Calu3 (cell line): ENCODE measurements at regions of chr18 and their contacts with region 1.

Region 1: DNA sequence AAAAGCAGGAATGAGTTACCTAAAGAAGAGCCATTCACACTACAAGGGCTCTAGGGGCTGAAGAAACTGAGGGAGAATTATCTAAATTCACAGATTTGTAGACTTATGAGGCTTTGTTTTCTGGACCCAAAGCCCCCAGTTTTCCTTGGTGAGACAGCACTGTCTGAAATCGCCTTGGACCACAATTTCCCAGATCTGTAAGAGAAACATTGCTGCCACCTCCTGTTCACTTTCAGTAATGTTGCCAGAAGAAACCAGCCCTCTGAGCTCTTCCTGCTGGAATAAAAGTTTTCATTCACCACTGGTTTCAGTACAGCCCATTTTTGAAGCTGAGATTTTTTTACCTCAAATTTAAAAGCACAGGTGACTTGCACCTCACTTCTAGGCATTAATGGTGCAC is 169.2 kb downstream of the CDH20 start:
- DNase-seq: peak; percentile 60
- H3K4me3 Mint-ChIP-seq: no peak overlapping the region
- H3K27ac Mint-ChIP-seq: no peak overlapping the region
- H3K4me1 Mint-ChIP-seq: peaks cover 15% of the 10 kb centered on the region
- H3K27me3 Mint-ChIP-seq: peaks cover 17% of the 10 kb centered on the region
- CTCF ChIP-seq: peak; percentile 54

Region 2: GRCh38 chr18:61085761-61086160 is 416.7 kb before region 1 on chr18:
- CTCF ChIA-PET with region 1: no interaction called
- intact Hi-C with region 1: loop called (anchors 2 kb)
- DNase-seq: no peak
- H3K4me3 Mint-ChIP-seq: no peak overlapping the region
- H3K27ac Mint-ChIP-seq: no peak overlapping the region
- H3K4me1 Mint-ChIP-seq: no peaks in the 10 kb centered on the region
- H3K27me3 Mint-ChIP-seq: no peaks in the 10 kb centered on the region
- CTCF ChIP-seq: no peak

Region 3: DNA sequence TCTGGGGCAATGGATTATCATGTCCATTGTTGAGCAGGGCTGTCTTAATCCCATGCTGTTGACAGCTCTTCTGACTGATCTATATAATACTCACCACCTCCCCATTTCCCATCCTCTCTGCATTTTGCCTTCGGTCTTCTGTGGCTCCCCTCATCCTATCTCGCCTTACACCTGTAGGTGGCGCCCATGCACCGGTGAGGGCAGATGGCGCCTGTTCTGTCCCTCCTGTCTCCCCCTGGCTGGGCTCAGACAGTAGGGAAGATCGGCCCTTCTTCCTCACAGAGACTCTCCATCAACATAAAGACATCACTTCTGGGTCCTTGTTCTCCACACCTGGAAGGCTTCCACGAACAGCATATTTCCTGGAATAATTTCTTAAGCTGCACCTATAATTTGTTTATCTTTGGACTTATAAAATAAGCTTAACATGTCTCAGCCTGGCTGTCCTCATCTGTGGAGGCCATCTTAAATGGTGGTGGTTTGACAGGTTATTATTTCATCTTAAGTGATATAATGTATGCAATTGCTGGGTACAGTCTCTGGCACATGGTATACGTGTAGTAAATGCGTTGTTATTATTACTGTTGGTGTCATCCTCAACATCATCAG is 180.1 kb before region 1 on chr18:
- CTCF ChIA-PET with region 1: interaction called, 44 read pairs
- intact Hi-C with region 1: loop called (anchors 1 kb)
- DNase-seq: peak; percentile 87
- H3K4me3 Mint-ChIP-seq: no peak overlapping the region
- H3K27ac Mint-ChIP-seq: no peak overlapping the region
- H3K4me1 Mint-ChIP-seq: no peaks in the 10 kb centered on the region
- H3K27me3 Mint-ChIP-seq: no peaks in the 10 kb centered on the region
- CTCF ChIP-seq: peak; percentile 96